Breast epithelium (tissue), 4 donors: ENCODE measurements at regions of chr18 and their contacts with region 1.

Region 1: DNA sequence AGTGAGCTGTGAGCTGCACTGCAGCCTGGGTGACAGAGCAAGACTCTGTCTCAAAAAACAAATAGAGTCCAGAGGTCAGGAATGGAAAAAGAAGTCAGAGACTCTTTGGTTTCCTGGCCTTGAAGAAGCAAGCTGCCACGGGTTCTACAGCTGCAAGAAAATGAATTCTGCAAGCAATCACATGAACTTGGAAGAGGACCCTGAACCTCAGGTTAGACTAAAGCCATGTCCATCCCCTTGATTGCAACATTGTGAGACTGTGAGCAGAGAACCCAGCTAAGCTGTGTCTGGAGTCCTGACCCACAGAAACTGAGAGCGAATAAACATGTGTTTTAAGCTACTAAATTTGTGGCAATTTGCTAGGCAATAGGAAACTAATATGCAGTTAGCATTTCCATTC is 12.9 kb upstream of the MIB1 start:
- DNase-seq: no peak
- H3K4me3 ChIP-seq: no peak overlapping the region
- H3K27ac ChIP-seq: no peak overlapping the region
- H3K4me1 ChIP-seq: no peaks in the 10 kb centered on the region
- H3K27me3 ChIP-seq: no peaks in the 10 kb centered on the region
- CTCF ChIP-seq: no peak
- POLR2A ChIP-seq: no peak

Region 2: GRCh38 chr18:21714474-21714873 is 13.2 kb before region 1 on chr18:
- intact Hi-C with region 1: loop called (anchors 1 kb)
- DNase-seq: no peak
- H3K4me3 ChIP-seq: no peak overlapping the region
- H3K27ac ChIP-seq: no peak overlapping the region
- H3K4me1 ChIP-seq: no peaks in the 10 kb centered on the region
- H3K27me3 ChIP-seq: no peaks in the 10 kb centered on the region
- CTCF ChIP-seq: no peak
- POLR2A ChIP-seq: no peak